MCF 10A (cell line): ENCODE measurements at regions of chr21 and their contacts with region 1.

Region 1: GRCh38 chr21:32826329-32827167 is 55.0 kb upstream of the PAXBP1 start:
- DNase-seq: peak; percentile 64
- H3K4me3 Mint-ChIP-seq: no peak overlapping the region
- H3K27ac Mint-ChIP-seq: no peak overlapping the region
- H3K4me1 Mint-ChIP-seq: no peaks in the 10 kb centered on the region
- H3K27me3 Mint-ChIP-seq: no peaks in the 10 kb centered on the region
- CTCF ChIP-seq: peak; percentile 50

Region 2: GRCh38 chr21:32653311-32653901 is 173.1 kb before region 1 on chr21:
- CTCF ChIA-PET with region 1: interaction called, 7 read pairs
- POLR2A ChIA-PET with region 1: no interaction called
- intact Hi-C with region 1: loop called (anchors 1 kb)
- DNase-seq: peak; percentile 27
- H3K4me3 Mint-ChIP-seq: no peak overlapping the region
- H3K27ac Mint-ChIP-seq: no peak overlapping the region
- H3K4me1 Mint-ChIP-seq: no peaks in the 10 kb centered on the region
- H3K27me3 Mint-ChIP-seq: no peaks in the 10 kb centered on the region
- CTCF ChIP-seq: peak; percentile 58

Region 3: GRCh38 chr21:32777269-32777840 is 49.2 kb before region 1 on chr21:
- CTCF ChIA-PET with region 1: interaction called, 17 read pairs
- POLR2A ChIA-PET with region 1: interaction called, 3 read pairs
- intact Hi-C with region 1: loop called (anchors 1 kb)
- DNase-seq: no peak
- H3K4me3 Mint-ChIP-seq: no peak overlapping the region
- H3K27ac Mint-ChIP-seq: no peak overlapping the region
- H3K4me1 Mint-ChIP-seq: no peaks in the 10 kb centered on the region
- H3K27me3 Mint-ChIP-seq: no peaks in the 10 kb centered on the region
- CTCF ChIP-seq: no peak

Region 4: DNA sequence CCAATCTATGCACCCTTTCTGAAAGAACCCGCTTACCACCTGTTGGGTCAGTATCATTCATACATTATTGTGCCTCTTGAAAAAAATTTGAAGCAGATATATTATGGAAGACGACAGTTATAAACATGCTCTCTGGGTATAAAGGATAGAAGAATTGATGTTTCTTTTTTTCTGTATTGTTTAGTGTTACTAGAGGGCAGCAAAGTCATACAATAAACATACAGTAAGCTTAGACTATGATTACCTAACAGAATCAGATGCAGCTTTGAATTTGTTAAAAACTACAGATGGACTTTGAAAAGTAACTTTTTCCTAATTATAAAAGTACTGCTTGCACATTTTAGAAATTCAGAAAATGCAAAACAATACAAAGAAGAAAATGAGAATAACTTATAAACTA is 43.9 kb before region 1 on chr21:
- CTCF ChIA-PET with region 1: interaction called, 17 read pairs
- POLR2A ChIA-PET with region 1: no interaction called
- intact Hi-C with region 1: loop called (anchors 1 kb)
- DNase-seq: no peak
- H3K4me3 Mint-ChIP-seq: no peak overlapping the region
- H3K27ac Mint-ChIP-seq: no peak overlapping the region
- H3K4me1 Mint-ChIP-seq: no peaks in the 10 kb centered on the region
- H3K27me3 Mint-ChIP-seq: no peaks in the 10 kb centered on the region
- CTCF ChIP-seq: no peak

Region 5: DNA sequence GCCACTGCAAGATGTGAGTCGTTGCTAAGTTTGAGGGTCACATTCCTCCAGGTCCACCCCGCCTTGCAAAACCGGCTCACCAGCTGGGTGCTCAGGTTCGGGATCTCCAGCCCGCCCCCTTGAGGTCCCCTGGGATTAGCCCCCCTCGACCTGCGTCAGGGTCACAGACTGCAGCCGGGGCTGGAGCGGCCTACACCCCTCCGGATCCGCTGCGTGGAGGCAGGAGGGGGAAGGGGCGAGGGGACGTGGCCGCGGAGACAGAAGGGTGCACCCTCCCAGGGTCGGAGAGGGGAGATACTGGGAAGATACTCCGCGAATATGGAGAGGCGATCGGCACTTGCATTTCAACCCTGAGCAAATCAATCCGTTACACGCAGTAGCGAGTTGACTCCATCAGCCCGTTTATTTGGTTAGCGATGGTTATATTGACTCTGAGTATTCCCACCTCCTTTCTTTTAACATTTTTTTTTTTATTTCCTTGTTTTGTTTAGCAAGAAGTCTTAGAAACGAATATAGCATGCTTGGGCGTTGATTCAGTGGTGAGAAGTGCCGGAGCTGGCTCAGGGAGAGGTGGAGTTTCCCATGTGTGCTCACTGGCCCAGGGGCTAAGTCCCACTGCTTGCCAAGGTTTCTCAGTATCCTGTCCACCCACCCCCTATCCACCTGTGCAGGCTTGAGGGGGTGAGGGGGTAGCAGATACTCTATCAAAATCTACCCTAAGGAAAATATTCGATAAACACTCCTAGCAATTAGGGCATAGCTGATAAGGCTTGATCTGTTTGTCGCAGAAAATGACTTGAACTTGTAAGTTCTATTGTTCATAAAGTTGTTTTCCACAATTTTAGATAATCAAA is 404.2 kb after region 1 on chr21:
- CTCF ChIA-PET with region 1: no interaction called
- POLR2A ChIA-PET with region 1: no interaction called
- intact Hi-C with region 1: no loop called
- DNase-seq: peak; percentile 54
- H3K4me3 Mint-ChIP-seq: peak overlapping the region; percentile 82
- H3K27ac Mint-ChIP-seq: no peak overlapping the region
- H3K4me1 Mint-ChIP-seq: peaks cover 23% of the 10 kb centered on the region
- H3K27me3 Mint-ChIP-seq: no peaks in the 10 kb centered on the region
- CTCF ChIP-seq: no peak